ENCODE measurements at regions of chrX and their contacts with region 1.

Region 1: GRCh38 chrX:72276478-72276953 is 532 bp downstream of the RPS4X start:
- DNase-seq: no peak
- ATAC-seq: peak; percentile 3
- H3K4me3 Mint-ChIP-seq: peak overlapping the region; percentile 83
- H3K27ac Mint-ChIP-seq: peak overlapping the region; percentile 85
- H3K4me1 Mint-ChIP-seq: peaks cover 44% of the 10 kb centered on the region
- H3K27me3 Mint-ChIP-seq: peaks cover 12% of the 10 kb centered on the region

Region 2: DNA sequence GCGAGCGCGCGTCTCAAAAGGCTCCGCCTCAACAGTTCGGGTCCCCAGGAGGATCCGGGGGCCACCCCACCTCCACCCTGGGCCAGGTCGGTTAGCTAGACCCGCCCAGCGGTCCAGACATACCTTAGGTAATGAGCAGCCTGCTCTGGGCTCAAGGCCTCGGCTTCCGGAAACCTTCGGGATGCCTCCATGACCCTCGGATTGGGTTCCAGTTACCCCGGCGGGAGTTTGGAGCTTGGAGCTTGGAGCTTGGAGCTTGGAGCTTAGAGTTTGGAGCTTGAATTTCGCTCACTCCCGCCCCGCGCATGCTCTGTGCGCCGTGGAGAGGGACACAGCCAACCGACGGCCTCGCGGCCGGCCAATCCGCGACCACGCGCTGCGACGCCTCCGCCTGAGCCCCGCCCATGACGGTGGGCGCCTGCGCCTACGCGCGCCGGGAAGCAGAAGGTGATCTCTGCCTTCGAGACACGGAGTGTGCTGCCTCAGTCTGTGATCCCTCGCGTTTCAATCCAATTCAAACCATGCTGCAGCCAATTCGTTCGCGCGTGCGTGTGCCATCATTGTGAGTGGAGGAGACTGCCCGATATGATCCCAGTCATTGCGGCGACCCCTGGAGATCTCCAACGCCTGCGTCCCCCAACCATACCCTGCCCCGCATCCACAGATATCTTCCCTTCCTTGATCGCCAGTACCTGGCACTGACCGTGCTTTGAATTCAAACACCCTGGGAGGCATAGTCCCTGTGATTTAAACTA is 37.6 kb before region 1 on chrX and contains the start of gene ERCC6L:
- CTCF ChIA-PET with region 1: interaction called, 9 read pairs
- POLR2A ChIA-PET with region 1: interaction called, 16 read pairs
- DNase-seq: peak; percentile 89
- ATAC-seq: peak; percentile 99
- H3K4me3 Mint-ChIP-seq: peak within 1 kb of the TSS; percentile 84
- H3K27ac Mint-ChIP-seq: peak within 1 kb of the TSS; percentile 81
- H3K4me1 Mint-ChIP-seq: peaks cover 18% of the 10 kb centered on the region
- H3K27me3 Mint-ChIP-seq: no peaks in the 10 kb centered on the region
- total RNA-seq, gene ERCC6L: 13.8 to 14.4 TPM

Region 3: DNA sequence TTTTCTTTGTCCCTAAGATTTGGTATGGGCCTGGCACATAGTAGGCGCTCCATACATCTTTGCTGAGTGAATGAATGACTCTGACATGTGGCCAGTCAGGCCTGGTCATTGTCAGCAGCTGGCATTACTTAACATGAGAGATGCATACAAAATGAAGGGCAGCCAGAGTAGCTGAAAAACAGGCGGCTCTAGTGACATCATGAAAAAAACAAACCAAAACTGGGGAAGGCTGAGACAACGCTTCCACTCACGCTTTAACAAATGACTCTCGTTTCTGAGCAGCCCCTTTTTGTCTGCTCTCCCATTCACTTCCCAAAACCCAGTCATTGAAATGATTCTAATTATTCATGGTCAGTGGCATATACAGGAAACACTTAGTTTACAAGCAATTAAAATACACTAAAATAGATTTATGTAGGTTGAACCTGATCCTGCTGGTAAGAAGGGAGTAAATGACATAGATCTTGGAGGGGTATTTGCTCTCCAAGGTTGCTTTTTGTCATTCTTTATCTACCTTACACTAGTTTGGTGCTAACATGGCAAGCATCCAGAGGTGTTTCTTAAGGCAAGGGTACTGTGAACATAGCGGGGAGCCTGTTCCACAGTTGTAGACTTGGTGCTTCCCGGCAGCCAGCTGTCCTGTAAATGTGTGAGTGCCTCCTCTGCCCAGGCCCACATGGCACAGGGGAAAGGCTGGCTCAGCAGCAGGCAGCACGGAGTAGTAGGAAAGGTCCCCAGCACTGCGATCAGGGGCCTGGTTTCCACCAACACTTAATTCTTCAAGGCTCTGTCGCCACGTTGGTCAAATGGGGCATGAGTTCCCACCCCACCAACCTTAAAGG is 90.3 kb after region 1 on chrX:
- CTCF ChIA-PET with region 1: no interaction called
- POLR2A ChIA-PET with region 1: no interaction called
- DNase-seq: no peak
- ATAC-seq: no peak
- H3K4me3 Mint-ChIP-seq: no peak overlapping the region
- H3K27ac Mint-ChIP-seq: no peak overlapping the region
- H3K4me1 Mint-ChIP-seq: no peaks in the 10 kb centered on the region
- H3K27me3 Mint-ChIP-seq: no peaks in the 10 kb centered on the region